Psoas muscle (tissue), 8 donors: ENCODE measurements at regions of chr10 and their contacts with region 1.

Region 1: GRCh38 chr10:116742367-116743265 is at the start of gene HSPA12A:
- DNase-seq: peak; percentile 83 to 87
- ATAC-seq: peak; percentile 88 to 90 (median 90)
- H3K4me3 ChIP-seq: peak within 1 kb of the TSS; percentile 89
- H3K27ac ChIP-seq: peak within 1 kb of the TSS; percentile 97
- H3K4me1 ChIP-seq: no peaks in the 10 kb centered on the region
- H3K27me3 ChIP-seq: peaks cover 0 to 6% (median 0%) of the 10 kb centered on the region in 3 donors
- CTCF ChIP-seq: peak; percentile 4
- total RNA-seq, gene HSPA12A: 7.0 to 11.4 (median 8.9) TPM

Region 2: GRCh38 chr10:116444527-116445142 is 298.0 kb before region 1 on chr10:
- intact Hi-C with region 1: no loop called
- DNase-seq: no peak
- ATAC-seq: no peak
- H3K4me3 ChIP-seq: no peak overlapping the region
- H3K27ac ChIP-seq: no peak overlapping the region
- H3K4me1 ChIP-seq: no peaks in the 10 kb centered on the region
- H3K27me3 ChIP-seq: no peaks in the 10 kb centered on the region
- CTCF ChIP-seq: peak; percentile 56

Region 3: DNA sequence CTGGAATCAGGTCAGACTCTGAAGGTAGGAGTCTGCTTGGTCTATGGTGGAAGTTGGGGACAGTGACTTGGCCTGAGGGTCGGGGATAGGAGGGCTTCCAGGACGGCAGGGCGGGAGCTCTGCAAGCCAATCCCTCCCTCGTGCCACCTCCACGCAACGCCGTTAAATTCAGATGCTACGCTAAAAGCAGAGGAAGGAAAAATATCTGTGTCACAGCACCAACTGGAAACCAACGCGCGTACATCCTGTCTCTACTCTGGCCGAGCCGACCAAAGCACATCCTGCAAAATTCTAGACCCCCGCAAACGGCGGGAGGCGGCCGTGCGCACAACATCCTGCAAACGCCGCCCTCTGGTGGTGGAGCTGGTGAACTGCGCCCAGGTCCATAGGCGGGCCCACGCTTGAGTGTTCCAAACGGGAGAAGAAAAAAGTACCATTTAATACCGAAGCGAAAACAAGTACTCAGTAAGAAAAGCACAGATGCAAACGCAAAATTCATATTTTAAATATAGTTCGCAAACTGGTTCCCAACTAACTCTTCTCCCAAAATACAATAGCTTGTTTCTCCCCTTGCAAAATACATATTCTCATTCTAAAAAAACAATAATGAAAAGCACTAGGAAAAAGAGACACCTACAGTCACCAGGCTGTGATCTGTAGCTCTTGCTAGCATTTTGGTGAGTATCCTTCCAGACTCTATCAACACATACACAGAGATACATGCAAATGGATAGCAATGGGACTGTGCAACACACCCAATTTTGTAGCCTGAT is 45.5 kb after region 1 on chr10:
- intact Hi-C with region 1: loop called in 1 of 2 experiments (anchors 5 kb)
- DNase-seq: peak; percentile 81 to 87
- ATAC-seq: peak; percentile 79 to 94 (median 80)
- H3K4me3 ChIP-seq: peak overlapping the region; percentile 15
- H3K27ac ChIP-seq: no peak overlapping the region
- H3K4me1 ChIP-seq: peaks cover 6% of the 10 kb centered on the region
- H3K27me3 ChIP-seq: peaks cover 0 to 2% (median 0%) of the 10 kb centered on the region in 3 donors
- CTCF ChIP-seq: peak; percentile 100